ENCODE measurements at regions of chr12 and their contacts with region 1.

Region 1: GRCh38 chr12:56117778-56118687 is at the start of gene ZC3H10:
- H3K4me3 Mint-ChIP-seq: peak within 1 kb of the TSS; percentile 94
- H3K27ac Mint-ChIP-seq: peak within 1 kb of the TSS; percentile 99
- H3K4me1 Mint-ChIP-seq: peaks cover 52% of the 10 kb centered on the region
- H3K27me3 Mint-ChIP-seq: no peaks in the 10 kb centered on the region

Region 2: DNA sequence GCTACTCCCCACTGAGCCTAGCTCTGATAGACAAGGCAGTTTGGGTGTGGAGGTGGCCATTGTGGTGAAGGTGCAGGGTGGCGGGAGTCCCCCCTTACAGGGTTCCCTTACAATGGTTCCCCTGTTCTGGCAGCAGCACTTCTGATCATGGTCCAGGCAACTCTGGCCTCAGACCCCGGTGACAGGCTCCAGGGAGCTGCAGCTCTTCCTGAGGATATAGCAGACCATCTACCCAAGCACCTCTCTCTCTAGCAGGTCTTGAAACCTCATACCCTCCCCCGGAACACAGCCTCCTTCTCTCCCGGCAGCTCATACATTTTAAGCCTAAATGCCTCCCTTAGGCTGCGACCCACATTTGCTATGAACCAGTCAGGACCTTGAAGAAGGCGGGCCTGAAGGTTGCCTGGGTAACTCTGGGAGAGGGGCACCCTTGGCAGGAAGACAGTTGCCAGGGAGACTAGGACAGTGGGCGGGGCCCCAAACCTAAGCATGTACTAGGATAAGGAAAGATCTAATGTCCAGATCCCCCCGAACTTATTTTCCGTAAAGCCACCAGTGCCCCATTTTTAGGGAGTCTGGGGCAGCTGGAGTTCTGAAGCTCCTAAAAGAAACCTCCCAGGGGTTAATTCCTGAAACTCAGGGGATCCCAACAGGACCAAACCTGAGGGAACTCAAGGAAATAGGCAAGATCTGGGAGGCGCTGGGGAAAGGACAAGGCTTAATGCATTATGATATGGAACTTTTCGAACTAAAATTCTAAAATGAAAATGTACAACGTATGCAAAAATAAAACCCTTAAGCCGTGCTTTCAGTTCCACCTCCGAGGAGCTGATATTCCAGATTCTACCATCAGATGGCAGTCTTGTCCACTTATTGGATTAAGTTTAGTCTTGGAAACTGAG is 379.7 kb before region 1 on chr12:
- intact Hi-C with region 1: loop called (anchors 5 kb)
- H3K4me3 Mint-ChIP-seq: peak overlapping the region; percentile 73
- H3K27ac Mint-ChIP-seq: peak overlapping the region; percentile 90
- H3K4me1 Mint-ChIP-seq: peaks cover 35% of the 10 kb centered on the region
- H3K27me3 Mint-ChIP-seq: peaks cover 20% of the 10 kb centered on the region

Region 3: DNA sequence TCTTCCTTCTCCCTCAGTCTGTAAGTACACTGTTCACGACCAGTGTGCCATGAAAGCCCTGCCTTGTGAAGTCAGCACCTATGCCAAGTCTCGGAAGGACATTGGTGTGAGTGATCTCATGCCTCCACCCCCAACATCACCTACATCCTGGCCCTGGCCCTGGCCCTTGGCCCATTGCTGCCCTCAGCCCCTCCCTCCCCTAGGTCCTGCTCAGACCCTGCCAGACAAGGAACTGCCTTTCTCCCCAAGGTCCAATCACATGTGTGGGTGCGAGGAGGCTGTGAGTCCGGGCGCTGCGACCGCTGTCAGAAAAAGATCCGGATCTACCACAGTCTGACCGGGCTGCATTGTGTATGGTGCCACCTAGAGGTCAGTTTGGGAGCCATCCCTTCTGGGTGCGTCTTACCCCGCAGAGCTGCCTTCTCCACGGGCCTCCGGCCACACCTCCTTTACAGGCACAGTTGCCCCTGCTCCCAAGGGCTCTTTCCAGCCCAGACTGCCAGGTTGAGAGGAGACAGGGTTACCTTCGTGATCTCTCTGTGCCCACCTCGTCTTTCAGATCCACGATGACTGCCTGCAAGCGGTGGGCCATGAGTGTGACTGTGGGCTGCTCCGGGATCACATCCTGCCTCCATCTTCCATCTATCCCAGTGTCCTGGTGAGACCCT is 177.8 kb before region 1 on chr12:
- intact Hi-C with region 1: no loop called
- H3K4me3 Mint-ChIP-seq: no peak overlapping the region
- H3K27ac Mint-ChIP-seq: no peak overlapping the region
- H3K4me1 Mint-ChIP-seq: peaks cover 19% of the 10 kb centered on the region
- H3K27me3 Mint-ChIP-seq: no peaks in the 10 kb centered on the region

Region 4: DNA sequence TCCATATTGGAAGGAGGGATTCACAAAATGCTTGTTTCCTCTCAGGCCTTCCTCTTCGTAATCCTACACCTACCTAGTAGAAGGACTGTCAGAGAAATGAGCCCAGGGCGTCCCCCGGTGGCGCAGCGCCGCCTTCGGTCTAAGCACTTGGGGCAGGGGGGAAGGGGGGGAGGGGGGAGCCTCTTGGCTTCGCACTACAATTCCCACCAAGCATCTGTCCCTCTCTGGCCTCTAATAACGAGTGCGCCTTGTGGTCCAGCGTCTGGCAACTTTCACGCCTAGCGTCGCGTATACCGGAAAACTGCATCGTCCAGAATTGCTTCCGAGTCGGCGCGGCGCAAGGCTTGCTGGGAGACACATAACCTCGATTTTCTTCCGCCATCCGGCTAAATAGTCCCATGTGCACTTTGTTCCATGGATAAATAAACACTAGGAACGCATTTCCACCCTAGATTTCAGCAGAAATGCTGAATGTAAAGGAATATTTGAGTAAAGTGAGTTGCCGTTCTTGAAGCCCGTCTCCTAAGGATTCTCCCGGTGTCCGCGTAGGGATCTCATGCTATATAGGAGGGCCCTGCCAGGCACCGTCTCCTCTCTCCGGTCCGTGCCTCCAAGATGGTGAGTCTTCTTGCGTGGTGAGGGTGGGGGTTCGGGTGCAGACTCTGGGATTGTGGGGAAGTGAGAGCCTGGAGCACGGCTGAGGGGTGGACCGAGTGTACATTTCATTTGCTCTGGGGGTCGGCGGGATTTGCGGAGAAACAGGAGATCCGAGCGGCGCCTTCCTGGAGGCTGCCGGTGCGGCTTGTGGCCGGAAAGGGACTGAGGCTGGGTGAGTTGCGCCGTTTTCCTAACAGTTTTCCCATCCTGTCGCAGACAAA is 76.2 kb before region 1 on chr12 and contains the start of gene RPS26:
- intact Hi-C with region 1: loop called (anchors 5 kb)
- H3K4me3 Mint-ChIP-seq: peak within 1 kb of the TSS; percentile 95
- H3K27ac Mint-ChIP-seq: peak within 1 kb of the TSS; percentile 97
- H3K4me1 Mint-ChIP-seq: peaks cover 10% of the 10 kb centered on the region
- H3K27me3 Mint-ChIP-seq: no peaks in the 10 kb centered on the region

Region 5: DNA sequence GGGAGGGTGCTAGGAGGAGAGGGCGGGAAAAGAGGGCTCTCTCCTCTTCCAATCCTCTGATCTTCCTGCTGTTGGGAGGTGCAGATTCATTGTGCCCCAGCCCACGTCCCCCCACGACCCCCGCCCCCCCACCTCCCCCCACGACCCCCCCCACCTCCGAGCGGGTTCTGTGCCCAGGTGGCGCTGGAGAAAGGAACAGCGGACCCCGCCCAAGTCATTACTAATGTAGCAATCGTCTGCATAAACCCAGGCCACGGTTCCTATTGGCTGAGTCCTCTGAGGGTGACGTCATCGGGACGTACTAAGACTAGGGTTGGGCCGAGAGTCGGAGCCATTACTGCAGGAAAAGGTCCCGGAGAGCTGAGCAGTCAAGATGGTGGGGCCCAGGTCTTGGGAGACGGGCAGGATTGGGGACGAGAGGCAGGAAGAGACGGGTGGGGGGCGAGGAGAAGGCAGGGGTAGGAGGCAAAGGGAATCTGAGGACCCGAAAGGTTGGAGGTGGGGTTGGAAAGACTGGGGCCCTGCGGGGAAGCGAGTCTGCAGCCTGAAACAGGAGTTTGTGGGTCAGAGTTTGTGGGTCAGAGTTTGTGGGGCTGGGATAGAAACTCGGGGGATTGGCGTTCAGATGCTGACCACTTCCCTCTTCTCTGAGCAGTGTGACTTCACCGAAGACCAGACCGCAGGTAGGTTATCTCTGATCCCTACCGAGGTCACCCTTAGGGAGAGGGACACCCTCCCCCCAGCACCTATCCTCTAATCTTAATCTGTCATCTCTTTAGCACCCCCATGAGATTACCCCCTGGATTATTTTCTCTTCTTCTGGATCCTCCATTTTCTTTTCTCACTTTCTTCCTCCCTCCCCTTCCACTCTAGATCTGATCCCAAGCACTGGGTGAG is 40.2 kb after region 1 on chr12 and contains the start of gene MYL6:
- intact Hi-C with region 1: loop called (anchors 2 kb)
- H3K4me3 Mint-ChIP-seq: peak within 1 kb of the TSS; percentile 93
- H3K27ac Mint-ChIP-seq: peak within 1 kb of the TSS; percentile 98
- H3K4me1 Mint-ChIP-seq: peaks cover 63% of the 10 kb centered on the region
- H3K27me3 Mint-ChIP-seq: no peaks in the 10 kb centered on the region

Region 6: DNA sequence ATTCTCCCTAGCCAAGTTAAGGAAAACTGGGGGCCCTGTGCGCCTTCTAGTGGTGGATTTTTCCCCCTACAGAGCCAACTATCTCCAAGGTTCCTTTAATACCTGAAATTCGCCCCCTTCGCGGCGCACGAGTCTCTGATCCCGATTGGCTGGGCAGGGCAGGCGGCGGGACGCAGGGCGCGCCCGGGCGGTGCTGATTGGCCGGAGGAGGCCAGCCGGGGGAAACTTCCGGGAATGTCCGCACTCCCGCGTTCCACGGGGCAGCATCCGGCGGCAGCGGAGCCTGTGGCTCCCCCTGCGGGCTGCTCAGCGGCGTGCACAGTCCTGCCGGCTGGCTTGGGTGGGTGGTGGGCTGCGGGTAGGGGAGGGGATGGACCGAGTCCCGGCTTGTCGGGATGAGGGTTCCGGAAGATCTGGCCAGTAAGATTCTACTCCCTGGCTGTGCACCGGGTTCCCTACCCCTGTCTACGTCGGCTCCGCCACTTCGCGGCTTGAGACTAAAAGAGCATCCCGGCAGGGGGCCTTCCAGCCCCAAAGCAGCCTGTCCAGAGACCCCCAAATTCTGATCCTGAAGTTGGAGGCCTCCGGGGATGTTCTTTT is 106.2 kb after region 1 on chr12 and contains the start of gene NABP2:
- intact Hi-C with region 1: loop called (anchors 1 kb)
- H3K4me3 Mint-ChIP-seq: peak within 1 kb of the TSS; percentile 81
- H3K27ac Mint-ChIP-seq: peak within 1 kb of the TSS; percentile 100
- H3K4me1 Mint-ChIP-seq: peaks cover 52% of the 10 kb centered on the region
- H3K27me3 Mint-ChIP-seq: no peaks in the 10 kb centered on the region

Region 7: DNA sequence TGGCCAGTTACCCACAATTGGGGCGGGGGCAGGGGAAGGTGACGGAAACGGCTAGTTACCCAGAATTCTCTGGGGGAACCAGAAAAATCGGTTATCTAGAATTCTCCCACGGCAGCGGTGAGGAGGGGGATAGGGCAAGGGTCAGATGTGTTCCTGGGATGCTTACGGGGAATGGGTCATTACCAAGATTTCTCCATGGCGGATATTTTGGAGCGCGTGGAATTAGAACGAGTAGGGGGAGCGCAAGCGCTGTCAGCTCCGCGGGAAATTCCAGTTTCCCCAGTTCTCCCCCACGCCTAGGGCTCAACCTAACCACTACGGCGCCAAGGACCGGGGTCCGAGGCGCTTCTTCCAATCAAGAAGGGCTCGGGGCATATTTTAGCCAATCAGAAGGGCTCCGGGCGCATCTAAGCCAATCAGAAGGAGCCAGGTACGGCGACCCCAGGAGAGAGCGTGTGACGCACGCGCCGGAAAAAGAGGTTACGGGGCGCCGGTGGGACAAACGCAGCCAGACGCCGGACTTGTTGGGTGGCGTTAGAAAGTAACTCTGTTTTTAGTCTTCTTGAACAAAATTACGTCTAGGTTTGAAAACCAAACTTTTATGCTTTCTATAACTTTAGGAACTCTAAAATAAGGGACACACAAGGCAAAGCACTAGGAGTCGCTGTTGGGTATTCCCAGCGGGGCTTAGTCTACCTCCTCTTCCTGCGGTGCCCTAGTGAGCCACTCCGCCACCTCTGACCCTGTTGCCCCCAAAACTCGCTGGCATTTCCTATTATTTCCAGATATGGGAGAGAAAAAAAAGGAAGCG is 215.9 kb after region 1 on chr12 and contains the start of gene PAN2:
- intact Hi-C with region 1: no loop called
- H3K4me3 Mint-ChIP-seq: peak within 1 kb of the TSS; percentile 88
- H3K27ac Mint-ChIP-seq: peak within 1 kb of the TSS; percentile 100
- H3K4me1 Mint-ChIP-seq: peaks cover 60% of the 10 kb centered on the region
- H3K27me3 Mint-ChIP-seq: no peaks in the 10 kb centered on the region